ENCODE measurements at regions of chr15 and their contacts with region 1.

Region 1: GRCh38 chr15:89893696-89894455 is at the start of gene AP3S2:
- DNase-seq: peak; percentile 94
- H3K4me3 Mint-ChIP-seq: peak within 1 kb of the TSS; percentile 98
- H3K27ac Mint-ChIP-seq: peak within 1 kb of the TSS; percentile 97
- H3K4me1 Mint-ChIP-seq: no peaks in the 10 kb centered on the region
- H3K27me3 Mint-ChIP-seq: no peaks in the 10 kb centered on the region
- CTCF ChIP-seq: no peak
- total RNA-seq, gene AP3S2: 38.4 and 39.5 TPM in 2 replicates

Region 2: DNA sequence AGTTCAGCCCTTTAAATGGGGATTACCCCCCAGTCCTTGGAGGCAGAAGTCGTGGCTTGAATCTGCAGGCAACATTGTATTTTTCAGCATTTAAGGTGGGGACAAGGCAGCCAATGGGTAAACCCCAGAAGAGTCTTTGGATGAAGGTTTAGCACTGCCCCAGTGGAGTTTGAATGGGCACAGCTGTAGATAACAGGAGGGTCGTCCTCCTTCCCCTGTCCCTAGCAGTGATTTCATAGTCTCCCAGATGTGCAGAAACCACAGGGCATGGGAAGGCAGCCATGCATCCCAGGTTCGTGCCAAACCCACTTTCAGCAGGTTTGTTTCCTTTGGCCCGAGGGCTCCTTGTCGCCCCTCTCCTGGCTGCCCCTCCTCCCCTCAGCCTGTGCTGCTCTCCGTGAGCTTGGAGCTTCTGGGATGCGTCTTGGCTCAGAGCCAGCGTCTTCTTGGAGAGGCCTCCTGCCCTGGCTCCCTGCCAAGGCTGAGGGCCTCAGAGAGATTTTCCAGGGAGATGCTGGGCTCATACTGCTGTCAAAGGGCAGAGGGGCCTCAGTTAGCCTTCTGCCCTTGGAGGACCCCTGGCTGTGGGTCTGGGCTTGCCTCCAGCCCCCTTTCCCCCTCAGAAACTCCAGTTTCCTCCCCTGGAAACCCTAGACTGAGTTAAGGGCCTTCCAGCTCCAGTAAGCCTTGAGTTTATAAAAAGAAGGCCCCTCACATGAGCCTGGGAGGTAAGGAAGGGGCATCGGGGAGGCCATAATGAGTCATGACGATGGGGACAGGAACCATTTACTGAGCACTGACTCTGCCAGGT is 510.3 kb before region 1 on chr15:
- CTCF ChIA-PET with region 1: no interaction called
- POLR2A ChIA-PET with region 1: no interaction called
- intact Hi-C with region 1: no loop called
- DNase-seq: peak; percentile 96
- H3K4me3 Mint-ChIP-seq: no peak overlapping the region
- H3K27ac Mint-ChIP-seq: no peak overlapping the region
- H3K4me1 Mint-ChIP-seq: no peaks in the 10 kb centered on the region
- H3K27me3 Mint-ChIP-seq: peaks cover 45% of the 10 kb centered on the region
- CTCF ChIP-seq: no peak

Region 3: DNA sequence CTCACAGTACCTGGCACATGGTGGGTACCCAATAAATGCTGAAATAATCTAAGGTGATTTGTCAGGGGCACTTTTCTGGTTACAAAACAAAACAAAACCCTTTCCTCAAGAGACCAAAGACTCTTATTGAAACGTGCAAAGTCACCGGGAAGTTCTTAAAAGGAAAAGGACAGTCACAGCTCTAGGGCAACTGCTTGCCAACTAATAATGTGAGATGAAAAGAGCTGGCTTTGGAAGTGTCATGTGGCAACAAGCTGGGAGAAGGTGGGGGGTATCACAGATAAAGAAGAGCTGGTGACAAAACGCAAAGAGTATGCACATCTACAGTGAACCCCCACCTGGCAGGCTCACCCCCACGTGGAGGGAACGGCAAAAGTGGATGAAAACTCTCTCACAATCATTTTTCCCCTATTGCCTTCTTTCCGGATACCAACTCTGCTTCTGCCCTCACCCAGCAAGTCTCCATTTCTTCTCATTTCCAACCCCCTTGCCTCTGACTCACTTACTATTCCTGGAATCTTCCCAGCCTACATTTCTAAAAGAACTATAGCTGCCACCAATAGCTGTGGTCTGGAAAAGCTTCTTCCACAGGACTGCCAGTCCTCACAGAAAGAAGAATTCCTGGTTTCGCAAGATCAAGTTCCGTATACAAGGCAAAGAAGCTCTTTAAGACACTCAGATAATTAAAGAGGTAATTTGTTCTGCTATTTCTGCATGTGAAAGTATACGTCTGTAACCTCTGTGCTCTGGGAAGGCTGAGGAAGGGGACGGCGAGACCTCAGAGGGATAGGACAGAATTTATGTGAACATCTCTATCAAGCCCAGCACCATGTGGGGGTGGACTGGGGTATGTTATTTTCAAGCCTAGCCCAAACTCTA is 57.4 kb before region 1 on chr15:
- CTCF ChIA-PET with region 1: interaction called, 3 read pairs
- POLR2A ChIA-PET with region 1: interaction called, 11 read pairs
- intact Hi-C with region 1: no loop called
- DNase-seq: peak; percentile 94
- H3K4me3 Mint-ChIP-seq: peak overlapping the region; percentile 63
- H3K27ac Mint-ChIP-seq: peak overlapping the region; percentile 98
- H3K4me1 Mint-ChIP-seq: peaks cover 35% of the 10 kb centered on the region
- H3K27me3 Mint-ChIP-seq: no peaks in the 10 kb centered on the region
- CTCF ChIP-seq: no peak

Region 4: GRCh38 chr15:89958074-89958805 is 64.4 kb after region 1 on chr15:
- CTCF ChIA-PET with region 1: interaction called, 5 read pairs
- POLR2A ChIA-PET with region 1: interaction called, 13 read pairs
- intact Hi-C with region 1: no loop called
- DNase-seq: peak; percentile 83
- H3K4me3 Mint-ChIP-seq: peak overlapping the region; percentile 14
- H3K27ac Mint-ChIP-seq: peak overlapping the region; percentile 90
- H3K4me1 Mint-ChIP-seq: peaks cover 15% of the 10 kb centered on the region
- H3K27me3 Mint-ChIP-seq: no peaks in the 10 kb centered on the region
- CTCF ChIP-seq: no peak

Region 5: GRCh38 chr15:90001683-90002427 is 108.0 kb after region 1 on chr15:
- CTCF ChIA-PET with region 1: interaction called, 20 read pairs
- POLR2A ChIA-PET with region 1: interaction called, 26 read pairs
- intact Hi-C with region 1: loop called (anchors 5 kb)
- DNase-seq: peak; percentile 53
- H3K4me3 Mint-ChIP-seq: peak overlapping the region; percentile 92
- H3K27ac Mint-ChIP-seq: peak overlapping the region; percentile 93
- H3K4me1 Mint-ChIP-seq: peaks cover 51% of the 10 kb centered on the region
- H3K27me3 Mint-ChIP-seq: no peaks in the 10 kb centered on the region
- CTCF ChIP-seq: no peak

Region 6: GRCh38 chr15:90071208-90071807 is 177.4 kb after region 1 on chr15:
- CTCF ChIA-PET with region 1: interaction called, 54 read pairs
- POLR2A ChIA-PET with region 1: interaction called, 21 read pairs
- intact Hi-C with region 1: loop called (anchors 1 kb)
- DNase-seq: peak; percentile 85
- H3K4me3 Mint-ChIP-seq: no peak overlapping the region
- H3K27ac Mint-ChIP-seq: no peak overlapping the region
- H3K4me1 Mint-ChIP-seq: peaks cover 5% of the 10 kb centered on the region
- H3K27me3 Mint-ChIP-seq: no peaks in the 10 kb centered on the region
- CTCF ChIP-seq: peak; percentile 77